A673 (cell line): ENCODE measurements at regions of chr6 and their contacts with region 1.

Region 1: DNA sequence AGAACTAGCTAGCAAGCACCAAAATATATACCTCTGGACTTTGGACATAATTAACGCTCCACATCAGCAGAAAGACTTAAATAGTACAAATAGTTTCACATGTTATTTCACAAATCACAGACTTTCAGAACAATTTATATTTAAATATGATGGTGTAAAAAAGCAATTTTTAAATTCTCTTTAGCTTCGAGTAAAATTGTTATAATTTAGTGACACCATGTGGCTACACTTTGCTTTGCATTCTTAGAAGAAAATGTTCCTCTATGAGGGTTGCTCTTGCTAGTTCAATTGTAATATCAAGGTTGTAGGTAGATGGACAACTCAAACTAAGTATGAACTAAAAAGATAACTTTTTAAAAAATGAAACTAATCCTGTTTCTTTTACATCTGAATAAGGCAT is 69.0 kb downstream of the BTBD9 start:
- DNase-seq: peak; percentile 11
- H3K4me3 ChIP-seq: no peak overlapping the region
- H3K27ac ChIP-seq: no peak overlapping the region
- H3K4me1 ChIP-seq: peaks cover 8% of the 10 kb centered on the region
- H3K27me3 ChIP-seq: no peaks in the 10 kb centered on the region
- CTCF ChIP-seq: peak; percentile 57; the same call in 1 of the 2 replicates

Region 2: DNA sequence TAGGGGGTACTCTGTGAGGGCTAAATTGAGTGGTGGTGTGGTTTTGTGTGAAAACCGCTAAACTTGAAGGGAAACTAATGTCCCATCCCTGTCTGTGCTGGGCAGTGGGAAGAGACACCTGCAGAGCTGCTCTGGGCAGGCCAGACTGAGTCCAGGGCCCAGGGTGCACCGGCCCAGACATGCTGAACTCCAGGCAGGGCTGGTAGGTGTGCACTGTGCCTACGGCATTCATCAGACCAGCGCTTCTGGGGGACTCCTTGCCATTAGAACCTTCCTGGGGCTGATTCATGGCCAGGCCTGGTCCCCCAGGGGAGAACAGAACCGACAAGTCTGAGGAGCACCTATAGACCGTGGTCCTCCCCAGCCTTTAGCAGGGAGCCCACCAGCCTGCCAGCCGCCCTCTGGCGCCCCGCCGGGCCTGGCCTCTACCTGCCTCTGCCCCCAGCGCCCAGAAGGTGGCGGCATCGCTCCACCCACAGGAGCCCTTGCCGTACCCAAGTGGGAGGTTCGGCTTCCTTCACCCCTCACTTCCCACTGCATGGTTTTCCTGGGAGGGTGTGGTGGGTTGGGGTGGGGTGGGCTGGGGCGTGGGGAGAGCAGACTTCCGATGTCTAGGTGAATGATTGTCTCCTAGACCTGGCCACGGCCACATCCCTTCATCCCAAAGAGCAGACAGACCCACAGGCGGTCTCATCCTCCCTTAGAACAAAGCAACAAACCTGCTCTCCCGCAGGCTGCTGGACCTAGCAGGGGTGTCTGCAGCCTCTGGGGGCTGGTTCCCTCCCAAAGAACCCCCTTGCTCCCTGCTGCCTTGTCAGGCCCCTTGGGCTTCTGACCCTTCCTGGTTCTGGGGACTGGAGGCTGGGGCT is 1086.6 kb before region 1 on chr6:
- CTCF ChIA-PET with region 1: no interaction called
- POLR2A ChIA-PET with region 1: interaction called, 3 read pairs
- intact Hi-C with region 1: loop called (anchors 10 kb)
- DNase-seq: peak; percentile 62
- H3K4me3 ChIP-seq: no peak overlapping the region
- H3K27ac ChIP-seq: no peak overlapping the region
- H3K4me1 ChIP-seq: peaks cover 4% of the 10 kb centered on the region
- H3K27me3 ChIP-seq: no peaks in the 10 kb centered on the region
- CTCF ChIP-seq: peak; percentile 81

Region 3: GRCh38 chr6:38695227-38695900 is 124.6 kb after region 1 on chr6:
- CTCF ChIA-PET with region 1: no interaction called
- POLR2A ChIA-PET with region 1: no interaction called
- intact Hi-C with region 1: no loop called
- DNase-seq: no peak
- H3K4me3 ChIP-seq: no peak overlapping the region
- H3K27ac ChIP-seq: no peak overlapping the region
- H3K4me1 ChIP-seq: no peaks in the 10 kb centered on the region
- H3K27me3 ChIP-seq: no peaks in the 10 kb centered on the region
- CTCF ChIP-seq: no peak